ENCODE measurements at regions of chr17 and their contacts with region 1.

Region 1: DNA sequence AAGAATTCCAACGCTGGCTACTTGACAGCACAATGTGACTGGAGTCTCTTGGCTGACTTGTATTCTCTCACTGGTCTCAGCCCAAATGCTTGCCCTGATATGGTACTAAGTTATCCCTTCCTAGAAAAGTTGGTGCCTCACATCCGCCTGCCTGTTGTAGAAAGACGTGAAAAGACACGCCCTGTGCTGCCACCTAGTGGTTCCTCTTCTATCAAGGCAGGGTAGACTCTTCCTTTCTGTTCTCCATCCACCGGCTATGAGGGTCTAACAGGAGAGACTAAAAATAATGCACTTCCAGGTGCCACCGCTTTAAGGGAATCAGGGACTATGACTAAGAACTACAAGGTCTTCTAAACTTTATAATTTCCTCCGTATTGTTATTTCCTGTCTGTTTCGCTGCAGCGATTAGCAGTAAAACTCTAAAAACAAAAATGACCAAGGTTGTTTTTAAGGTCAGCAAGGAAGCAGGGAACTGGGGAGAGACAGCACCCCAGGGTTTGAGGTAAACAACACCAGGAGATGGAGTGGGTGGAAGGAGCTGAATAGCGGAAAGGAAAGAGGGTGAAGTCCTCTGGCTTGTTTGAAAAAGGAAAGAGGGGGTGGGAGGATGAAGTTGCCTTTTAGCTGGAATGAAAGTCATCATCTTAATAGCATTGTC is 109.5 kb downstream of the YPEL2 start:
- DNase-seq: peak; percentile 89
- H3K4me3 ChIP-seq: no peak overlapping the region
- H3K27ac ChIP-seq: no peak overlapping the region
- H3K4me1 ChIP-seq: no peaks in the 10 kb centered on the region
- H3K27me3 ChIP-seq: no peaks in the 10 kb centered on the region
- CTCF ChIP-seq: peak; percentile 89

Region 2: DNA sequence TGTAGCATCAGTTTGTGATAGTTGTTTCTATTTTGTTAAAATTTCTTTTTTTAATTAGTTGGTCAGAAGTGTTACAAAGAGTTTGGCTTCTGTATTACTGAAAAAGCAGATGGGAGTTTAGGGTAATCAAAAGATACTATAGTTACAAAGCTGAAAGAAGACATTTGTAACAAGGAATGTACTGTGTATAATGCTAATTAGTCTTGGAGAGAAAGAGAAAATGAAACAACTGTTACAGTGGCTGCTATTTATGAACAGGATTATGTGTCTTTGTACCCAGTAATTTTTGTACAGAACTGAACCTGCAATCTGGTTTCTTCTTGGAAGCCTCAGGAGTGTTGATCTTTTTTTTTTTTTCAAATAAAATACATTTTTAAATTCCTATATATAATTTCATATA is 206.3 kb before region 1 on chr17:
- CTCF ChIA-PET with region 1: no interaction called
- POLR2A ChIA-PET with region 1: no interaction called
- intact Hi-C with region 1: no loop called
- DNase-seq: no peak
- H3K4me3 ChIP-seq: no peak overlapping the region
- H3K27ac ChIP-seq: no peak overlapping the region
- H3K4me1 ChIP-seq: no peaks in the 10 kb centered on the region
- H3K27me3 ChIP-seq: no peaks in the 10 kb centered on the region
- CTCF ChIP-seq: no peak

Region 3: DNA sequence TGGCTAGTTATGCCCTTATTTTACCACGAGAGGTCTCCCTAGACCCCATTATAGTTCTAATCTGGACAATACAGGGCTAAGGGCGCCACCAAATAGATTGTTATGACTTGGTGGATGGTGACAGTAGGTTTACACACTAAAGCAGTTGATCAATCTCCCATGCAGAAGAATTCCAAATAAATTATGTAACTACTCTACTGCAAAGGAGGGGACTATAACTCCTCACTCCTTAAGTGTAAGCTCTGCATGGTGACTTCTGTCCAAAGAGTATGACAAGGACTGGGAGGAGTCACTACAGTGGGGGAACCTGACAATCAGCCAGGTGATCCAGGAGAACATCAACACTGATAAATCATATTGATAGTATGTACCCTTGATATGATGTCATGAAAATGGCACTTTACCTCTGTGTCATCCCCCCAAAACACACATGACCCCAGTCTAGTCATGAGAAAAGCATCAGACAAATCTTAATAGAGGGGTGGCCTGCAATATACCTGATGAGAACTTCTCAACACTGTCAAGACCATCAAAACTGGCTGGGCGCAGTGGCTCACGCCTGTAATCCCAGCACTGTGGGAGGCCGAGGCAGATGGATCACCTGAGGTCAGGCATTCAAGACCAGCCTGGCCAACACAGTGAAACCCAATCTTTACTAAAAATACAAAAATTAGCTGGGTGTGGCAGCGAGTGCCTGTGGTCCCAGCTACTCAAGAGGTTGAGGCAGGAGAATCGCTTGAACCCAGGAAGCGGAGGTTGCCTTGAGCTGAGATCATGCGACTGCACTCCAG is 129.6 kb before region 1 on chr17:
- CTCF ChIA-PET with region 1: interaction called, 6 read pairs
- POLR2A ChIA-PET with region 1: no interaction called
- intact Hi-C with region 1: loop called (anchors 1 kb)
- DNase-seq: peak; percentile 80
- H3K4me3 ChIP-seq: no peak overlapping the region
- H3K27ac ChIP-seq: no peak overlapping the region
- H3K4me1 ChIP-seq: no peaks in the 10 kb centered on the region
- H3K27me3 ChIP-seq: no peaks in the 10 kb centered on the region
- CTCF ChIP-seq: peak; percentile 84

Region 4: DNA sequence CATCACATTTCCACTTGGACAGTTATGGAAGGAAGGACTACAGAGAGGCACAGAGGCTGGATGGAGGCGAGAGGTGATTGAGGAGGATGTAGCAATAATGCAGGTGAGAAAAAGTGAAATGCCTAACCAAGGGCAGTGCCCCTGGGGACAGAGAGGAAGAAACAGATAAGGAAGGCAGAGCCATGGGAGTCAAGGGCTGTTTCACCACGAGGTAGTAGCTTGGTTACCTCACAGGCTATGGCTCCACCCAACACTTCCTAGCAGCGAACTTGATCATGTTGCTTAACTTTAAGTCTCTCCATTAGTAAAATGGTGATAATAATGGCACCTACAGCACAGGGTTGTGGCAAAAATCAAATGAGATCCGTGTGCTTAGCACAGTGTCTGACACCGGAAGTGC is 25.5 kb before region 1 on chr17:
- CTCF ChIA-PET with region 1: no interaction called
- POLR2A ChIA-PET with region 1: no interaction called
- intact Hi-C with region 1: no loop called
- DNase-seq: no peak
- H3K4me3 ChIP-seq: no peak overlapping the region
- H3K27ac ChIP-seq: no peak overlapping the region
- H3K4me1 ChIP-seq: no peaks in the 10 kb centered on the region
- H3K27me3 ChIP-seq: no peaks in the 10 kb centered on the region
- CTCF ChIP-seq: no peak

Region 5: DNA sequence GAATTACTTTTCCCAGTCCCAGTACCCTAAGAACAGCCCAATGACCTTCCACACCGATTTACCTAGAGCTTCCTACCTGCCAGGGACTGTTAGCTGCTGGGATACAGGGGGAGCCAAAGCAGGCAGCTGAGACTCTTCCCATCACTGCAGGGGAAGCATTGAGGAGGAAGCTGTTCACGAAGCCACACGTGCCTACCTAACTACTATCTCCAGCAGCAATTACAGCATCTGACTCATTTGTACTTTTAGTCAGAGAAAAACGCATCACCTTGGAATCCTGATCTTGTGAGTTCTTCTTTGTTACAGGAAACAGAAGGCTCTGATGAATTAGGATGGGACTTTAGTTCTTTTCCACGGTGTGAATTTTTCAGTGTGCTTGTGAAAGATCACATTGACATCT is 10.8 kb after region 1 on chr17:
- CTCF ChIA-PET with region 1: no interaction called
- POLR2A ChIA-PET with region 1: interaction called, 11 read pairs
- intact Hi-C with region 1: no loop called
- DNase-seq: no peak
- H3K4me3 ChIP-seq: no peak overlapping the region
- H3K27ac ChIP-seq: no peak overlapping the region
- H3K4me1 ChIP-seq: no peaks in the 10 kb centered on the region
- H3K27me3 ChIP-seq: no peaks in the 10 kb centered on the region
- CTCF ChIP-seq: no peak